Activated T-helper 1 cell treated with anti-CD3 and anti-CD28 coated beads, Interleukin-12 subunit alpha, Interleukin-12 subunit beta, Interleukin-2, Interleukin-4 antibody, amounts not matched to agents 30 ng/mL and 10 ng/mL and 1 ng/mL, durations not matched to agents 14 hours and 24 hours and 36 hours (primary cell): ENCODE measurements at regions of chr14 and their contacts with region 1.

Region 1: GRCh38 chr14:24114536-24115450 is at the starts of genes DCAF11 and NRL:
- DNase-seq: peak; percentile 98
- H3K4me3 Mint-ChIP-seq: peak within 1 kb of the TSS; percentile 99
- H3K27ac Mint-ChIP-seq: peak within 1 kb of the TSS; percentile 98
- H3K4me1 Mint-ChIP-seq: peaks cover 34% of the 10 kb centered on the region
- H3K27me3 Mint-ChIP-seq: no peaks in the 10 kb centered on the region
- total RNA-seq, gene DCAF11: 69.9 and 71.6 TPM in 2 replicates
- total RNA-seq, gene NRL: 2.1 and 2.7 TPM in 2 replicates

Region 2: DNA sequence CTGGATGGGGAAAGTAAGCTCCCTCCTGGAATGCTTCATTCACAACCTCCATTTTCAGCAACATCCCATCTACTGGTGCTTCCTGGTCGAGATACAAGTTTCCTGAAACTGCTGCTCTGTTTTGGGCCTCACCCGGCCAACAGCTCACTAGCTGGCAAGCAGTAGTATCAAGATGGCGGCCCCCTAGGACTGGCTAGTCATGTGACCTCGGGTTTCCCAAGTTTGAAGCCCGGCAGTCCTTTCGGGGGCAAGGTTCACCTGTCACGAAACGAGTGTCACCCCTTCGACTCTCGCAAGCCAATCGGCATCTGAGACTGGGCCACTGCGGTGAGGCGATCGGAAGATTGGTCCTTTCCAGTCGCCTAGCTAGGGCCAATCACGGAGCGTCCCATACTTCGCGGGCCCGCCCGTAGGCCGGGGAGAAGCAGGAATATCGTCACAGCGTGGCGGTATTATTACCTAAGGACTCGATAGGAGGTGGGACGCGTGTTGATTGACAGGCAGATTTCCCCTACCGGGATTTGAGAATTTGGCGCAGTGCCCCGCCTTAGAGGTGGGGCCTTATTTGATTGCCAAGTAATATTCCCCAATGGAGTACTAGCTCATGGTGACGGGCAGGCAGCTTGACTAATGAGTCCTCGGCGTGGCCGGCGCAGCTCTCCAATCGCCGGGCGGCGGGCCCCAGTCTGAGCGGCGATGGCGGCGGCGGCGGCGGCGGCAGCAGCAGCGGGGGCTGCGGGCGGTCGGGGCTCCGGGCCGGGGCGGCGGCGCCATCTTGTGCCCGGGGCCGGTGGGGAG is 793.8 kb before region 1 on chr14 and contains the start of gene PABPN1:
- intact Hi-C with region 1: loop called (anchors 10 kb)
- DNase-seq: peak; percentile 98
- H3K4me3 Mint-ChIP-seq: peak within 1 kb of the TSS; percentile 97
- H3K27ac Mint-ChIP-seq: peak within 1 kb of the TSS; percentile 97
- H3K4me1 Mint-ChIP-seq: peaks cover 30% of the 10 kb centered on the region
- H3K27me3 Mint-ChIP-seq: no peaks in the 10 kb centered on the region
- total RNA-seq, gene PABPN1: 252 and 266 TPM in 2 replicates

Region 3: DNA sequence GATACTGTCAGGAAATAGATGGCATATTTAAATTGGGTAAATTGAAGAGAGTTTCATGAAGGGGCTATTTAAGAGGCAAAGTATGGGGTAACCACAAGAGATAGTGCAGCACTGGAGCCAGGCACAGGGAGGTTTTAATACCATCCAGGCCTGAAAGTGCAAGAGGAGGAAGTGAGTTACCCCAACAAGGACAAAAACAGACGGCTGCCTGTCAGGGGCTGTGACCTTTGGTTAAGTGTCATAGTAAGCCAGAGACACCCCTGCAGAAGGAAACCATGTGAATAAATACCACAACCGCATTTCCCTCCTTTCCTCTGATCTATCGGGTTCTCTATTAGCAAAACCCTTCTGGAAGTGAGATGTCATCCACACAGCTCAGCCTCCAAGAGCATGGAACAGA is 283.2 kb before region 1 on chr14:
- intact Hi-C with region 1: no loop called
- DNase-seq: no peak
- H3K4me3 Mint-ChIP-seq: no peak overlapping the region
- H3K27ac Mint-ChIP-seq: no peak overlapping the region
- H3K4me1 Mint-ChIP-seq: no peaks in the 10 kb centered on the region
- H3K27me3 Mint-ChIP-seq: peaks cover 1% of the 10 kb centered on the region

Region 4: GRCh38 chr14:23910101-23910875 is 204.5 kb before region 1 on chr14:
- intact Hi-C with region 1: no loop called
- DNase-seq: no peak
- H3K4me3 Mint-ChIP-seq: no peak overlapping the region
- H3K27ac Mint-ChIP-seq: no peak overlapping the region
- H3K4me1 Mint-ChIP-seq: no peaks in the 10 kb centered on the region
- H3K27me3 Mint-ChIP-seq: peaks cover 9% of the 10 kb centered on the region

Region 5: DNA sequence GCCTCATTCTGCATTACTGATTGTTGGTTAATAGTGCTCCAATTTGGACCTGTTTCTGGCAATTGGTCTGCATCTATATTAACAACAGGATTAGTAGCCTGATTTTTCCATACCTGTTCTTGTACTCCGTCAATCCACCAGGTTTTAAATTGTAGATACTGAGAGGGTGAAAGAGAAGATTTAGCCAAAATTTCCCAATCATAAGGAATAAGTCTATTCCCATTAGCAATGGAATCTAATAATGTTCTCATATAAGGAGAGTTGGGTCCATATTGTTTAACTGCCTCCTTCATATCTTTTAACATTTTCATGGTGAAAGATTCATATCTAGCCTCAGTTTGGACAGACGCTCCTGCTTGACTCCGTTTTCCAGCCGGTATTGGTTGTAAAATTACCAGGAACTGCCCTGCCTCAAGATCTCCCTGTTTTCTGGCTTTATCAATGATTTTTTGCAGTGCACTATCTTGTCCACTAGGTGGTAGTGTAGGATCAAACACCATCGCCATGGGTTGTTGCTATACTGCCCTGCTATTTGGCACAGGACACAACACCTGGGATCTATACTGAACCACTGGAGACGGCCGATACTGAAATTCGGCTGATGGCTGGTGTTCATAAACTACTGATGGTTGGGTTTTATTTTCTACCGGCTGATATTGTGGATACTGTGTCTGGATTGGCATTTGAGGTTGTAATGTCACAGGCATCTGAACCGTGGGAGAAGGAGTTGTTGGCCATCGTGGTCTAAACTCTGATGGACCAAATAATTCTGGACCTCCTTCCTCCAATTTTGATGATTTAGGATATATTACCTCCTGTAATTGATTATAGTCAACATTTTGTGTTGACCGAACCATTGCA is 100.9 kb before region 1 on chr14:
- intact Hi-C with region 1: loop called (anchors 1 kb)
- DNase-seq: peak; percentile 57
- H3K4me3 Mint-ChIP-seq: no peak overlapping the region
- H3K27ac Mint-ChIP-seq: no peak overlapping the region
- H3K4me1 Mint-ChIP-seq: peaks cover 23% of the 10 kb centered on the region
- H3K27me3 Mint-ChIP-seq: peaks cover 7% of the 10 kb centered on the region

Region 6: GRCh38 chr14:24093901-24094761 is 20.7 kb before region 1 on chr14 and contains the start of gene PCK2:
- intact Hi-C with region 1: loop called (anchors 1 kb)
- DNase-seq: peak; percentile 70
- H3K4me3 Mint-ChIP-seq: peak within 1 kb of the TSS; percentile 100
- H3K27ac Mint-ChIP-seq: peak within 1 kb of the TSS; percentile 97
- H3K4me1 Mint-ChIP-seq: peaks cover 36% of the 10 kb centered on the region
- H3K27me3 Mint-ChIP-seq: no peaks in the 10 kb centered on the region
- total RNA-seq, gene PCK2: 55.0 and 62.8 TPM in 2 replicates

Region 7: DNA sequence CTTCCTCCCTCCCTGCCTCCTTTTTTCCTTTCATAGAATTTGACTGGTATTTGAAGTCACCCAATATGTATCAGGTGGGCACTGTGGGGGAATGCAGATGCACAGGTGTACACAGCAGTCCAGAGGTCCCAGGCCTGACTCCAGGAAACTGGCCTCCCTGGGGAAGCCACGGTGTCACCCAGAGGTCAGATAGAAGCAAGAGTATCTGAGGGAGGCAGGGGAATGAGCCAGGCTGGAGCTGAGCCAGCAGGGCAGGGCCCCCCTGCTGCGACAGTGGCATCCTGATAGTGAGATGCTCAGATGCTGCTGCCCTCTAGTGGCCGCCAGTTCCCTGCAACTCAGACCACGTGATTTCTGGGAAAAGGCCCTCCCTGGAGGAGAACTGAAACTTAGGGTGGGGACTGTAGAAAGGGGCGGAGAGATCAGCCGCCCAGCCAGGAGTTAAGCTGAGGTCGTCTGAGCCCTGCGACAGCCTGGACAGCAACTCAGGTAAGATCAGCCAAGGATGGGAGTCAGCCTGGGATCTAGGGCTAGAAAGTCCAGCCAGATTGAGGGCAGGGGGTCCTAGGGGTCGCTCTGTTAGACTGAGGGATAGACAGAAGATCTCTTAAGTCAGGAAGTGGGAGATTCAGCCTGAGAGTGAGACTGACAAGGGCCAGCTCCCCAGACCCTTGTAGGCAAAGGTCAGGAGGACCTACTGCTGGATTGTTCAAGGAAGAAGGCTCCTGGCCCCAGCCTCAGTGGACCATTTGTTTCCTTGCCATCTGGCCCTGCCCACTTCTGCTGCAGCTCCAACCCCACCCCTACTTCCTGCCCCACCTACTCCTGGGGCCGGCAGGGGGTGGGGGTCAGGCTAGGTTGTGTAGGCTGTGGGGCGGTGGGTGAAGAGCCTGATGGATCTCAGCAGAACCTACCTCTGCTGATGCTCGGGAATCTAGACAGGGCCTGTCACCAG is 46.3 kb after region 1 on chr14 and contains the start of gene IRF9:
- intact Hi-C with region 1: loop called (anchors 1 kb)
- DNase-seq: peak; percentile 98
- H3K4me3 Mint-ChIP-seq: peak within 1 kb of the TSS; percentile 99
- H3K27ac Mint-ChIP-seq: peak within 1 kb of the TSS; percentile 99
- H3K4me1 Mint-ChIP-seq: peaks cover 60% of the 10 kb centered on the region
- H3K27me3 Mint-ChIP-seq: peaks cover 4% of the 10 kb centered on the region
- total RNA-seq, gene IRF9: 130 and 152 TPM in 2 replicates

Region 8: DNA sequence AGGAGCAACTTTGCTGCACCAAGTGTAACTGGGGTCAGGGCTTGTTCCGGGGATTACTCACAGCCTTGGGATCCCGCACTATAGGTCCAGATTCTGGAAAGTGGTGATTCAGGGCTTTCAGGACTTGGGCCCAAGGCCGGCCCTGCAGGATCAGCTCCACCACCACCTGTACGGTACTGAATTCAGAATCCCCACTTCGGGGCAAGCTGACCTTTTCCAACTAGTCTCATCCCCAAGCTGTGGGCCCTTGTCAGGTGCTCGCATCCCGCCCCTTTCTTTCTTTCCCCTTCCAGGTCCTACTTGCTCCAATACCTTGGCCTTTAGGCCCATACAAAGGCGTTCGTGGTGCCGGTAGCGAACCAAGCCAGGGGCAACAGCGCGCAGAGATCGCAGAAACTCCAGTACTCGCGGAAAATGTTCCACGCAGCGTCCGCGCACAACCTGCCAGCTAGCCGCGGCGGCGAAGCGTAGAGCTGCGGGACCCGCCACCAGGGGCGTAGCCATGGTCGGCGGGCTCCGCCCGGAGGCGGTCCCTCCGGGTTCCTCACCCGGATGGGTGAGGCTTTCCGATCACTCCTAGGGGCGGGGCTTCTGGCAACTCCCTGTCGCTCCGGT is 127.1 kb after region 1 on chr14:
- intact Hi-C with region 1: loop called (anchors 1 kb)
- DNase-seq: peak; percentile 93
- H3K4me3 Mint-ChIP-seq: peak overlapping the region; percentile 96
- H3K27ac Mint-ChIP-seq: peak overlapping the region; percentile 99
- H3K4me1 Mint-ChIP-seq: peaks cover 58% of the 10 kb centered on the region
- H3K27me3 Mint-ChIP-seq: no peaks in the 10 kb centered on the region